CD8-positive, alpha-beta T cell (primary cell): ENCODE measurements at regions of chr2 and their contacts with region 1.

Region 1: GRCh38 chr2:168375195-168375798 is 80.8 kb upstream of the CERS6 start:
- DNase-seq: peak in 1 of 9 experiments; percentile 9
- ATAC-seq: no peak
- H3K4me3 ChIP-seq: no peak overlapping the region
- H3K4me3 Mint-ChIP-seq: no peak overlapping the region
- H3K27ac ChIP-seq: no peak overlapping the region
- H3K27ac Mint-ChIP-seq: no peak overlapping the region
- H3K4me1 ChIP-seq: peaks cover 10% of the 10 kb centered on the region
- H3K4me1 Mint-ChIP-seq: peaks cover 25% of the 10 kb centered on the region
- H3K27me3 ChIP-seq: no peaks in the 10 kb centered on the region
- H3K27me3 Mint-ChIP-seq: no peaks in the 10 kb centered on the region
- CTCF ChIP-seq: peak; percentile 49

Region 2: GRCh38 chr2:168455648-168456520 is 80.6 kb after region 1 on chr2 and contains the start of gene CERS6:
- CTCF ChIA-PET with region 1: no interaction called
- POLR2A ChIA-PET with region 1: no interaction called
- intact Hi-C with region 1: loop called in 1 of 2 experiments (anchors 10 kb)
- DNase-seq: peak; percentile 46 to 87 (median 73)
- ATAC-seq: peak; percentile 73
- H3K4me3 ChIP-seq: peak within 1 kb of the TSS; percentile 72 to 77
- H3K4me3 Mint-ChIP-seq: no peak within 1 kb of the TSS
- H3K27ac ChIP-seq: peak within 1 kb of the TSS in 1 of 2 experiments; percentile 44
- H3K27ac Mint-ChIP-seq: peak within 1 kb of the TSS; percentile 74
- H3K4me1 ChIP-seq: peaks cover 32% of the 10 kb centered on the region
- H3K4me1 Mint-ChIP-seq: peaks cover 40% of the 10 kb centered on the region
- H3K27me3 ChIP-seq: no peaks in the 10 kb centered on the region
- H3K27me3 Mint-ChIP-seq: no peaks in the 10 kb centered on the region
- CTCF ChIP-seq: no peak
- total RNA-seq, gene CERS6: 17.9 to 18.5 TPM

Region 3: DNA sequence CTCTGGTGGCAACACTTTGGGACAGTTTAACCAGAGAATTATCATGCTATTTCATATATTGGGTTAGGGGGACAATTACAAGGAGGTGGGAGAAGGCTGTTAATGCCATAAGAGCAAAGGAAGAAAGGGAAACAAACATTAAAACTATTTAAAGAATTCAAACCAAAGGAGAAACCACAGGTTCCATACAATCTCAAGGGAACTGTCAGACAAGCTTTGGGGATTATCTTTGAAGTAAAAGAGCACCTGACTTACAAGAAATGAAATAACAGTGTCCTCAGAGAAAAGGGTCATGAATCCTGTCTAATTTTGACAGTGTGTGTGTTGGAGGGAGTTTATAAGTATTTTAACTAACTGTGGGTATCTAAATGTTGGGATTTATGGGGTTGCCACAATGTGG is 125.2 kb after region 1 on chr2:
- CTCF ChIA-PET with region 1: no interaction called
- POLR2A ChIA-PET with region 1: no interaction called
- intact Hi-C with region 1: loop called (anchors 5 to 10 kb)
- DNase-seq: no peak
- ATAC-seq: no peak
- H3K4me3 ChIP-seq: no peak overlapping the region
- H3K4me3 Mint-ChIP-seq: no peak overlapping the region
- H3K27ac ChIP-seq: no peak overlapping the region
- H3K27ac Mint-ChIP-seq: no peak overlapping the region
- H3K4me1 ChIP-seq: peaks cover 6% of the 10 kb centered on the region
- H3K4me1 Mint-ChIP-seq: peaks cover 55% of the 10 kb centered on the region
- H3K27me3 ChIP-seq: no peaks in the 10 kb centered on the region
- H3K27me3 Mint-ChIP-seq: no peaks in the 10 kb centered on the region
- CTCF ChIP-seq: no peak